K562 (cell line): ENCODE measurements at regions of chr15 and their contacts with region 1.

Region 1: DNA sequence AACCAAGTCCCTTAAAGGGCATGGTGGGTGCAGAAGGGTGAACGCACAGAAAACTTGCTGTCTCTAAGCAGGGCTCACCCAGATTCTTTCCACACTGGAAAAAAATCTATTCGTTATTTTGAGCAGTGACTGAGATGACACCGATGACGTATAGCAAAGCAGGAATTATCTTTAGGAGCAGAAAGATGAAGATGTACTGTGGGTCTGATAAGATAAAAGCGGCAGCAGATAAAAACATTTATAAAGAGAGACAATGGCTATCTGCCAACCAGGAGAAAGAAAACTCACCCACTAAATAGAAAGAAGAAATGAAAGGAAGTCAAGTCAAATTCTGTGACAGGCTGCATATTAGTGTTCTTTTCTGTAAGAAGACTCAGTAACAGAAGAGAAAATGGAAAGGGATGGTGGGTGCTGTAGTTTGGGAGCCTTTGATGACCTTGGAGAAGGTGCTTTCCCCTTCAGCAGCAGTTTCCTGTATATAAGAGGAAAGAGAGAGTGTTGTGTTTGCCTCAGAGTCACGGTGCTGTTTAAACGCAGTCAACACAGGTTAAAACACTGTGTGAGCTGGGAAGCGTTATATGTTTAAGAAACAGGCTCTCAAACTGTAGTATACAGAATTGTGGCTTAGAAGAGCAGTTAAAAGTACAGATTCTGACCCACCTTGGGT is 111.6 kb downstream of the AQP9 start:
- DNase-seq: peak in 1 of 4 experiments; percentile 15
- ATAC-seq: no peak
- H3K4me3 ChIP-seq: no peak overlapping the region
- H3K27ac ChIP-seq: no peak overlapping the region
- H3K4me1 ChIP-seq: peaks cover 0 to 9% of the 10 kb centered on the region in 2 experiments; a peak in 3 of 5 replicates
- H3K27me3 ChIP-seq: no peaks in the 10 kb centered on the region
- CTCF ChIP-seq: no peak
- EP300 ChIP-seq: peak; percentile 65
- POLR2A ChIP-seq: no peak
- RAD21 ChIP-seq: no peak

Region 2: GRCh38 chr15:58632789-58633188 is 383.0 kb after region 1 on chr15:
- CTCF ChIA-PET with region 1: no interaction called
- POLR2A ChIA-PET with region 1: no interaction called
- in situ Hi-C with region 1: loop called (anchors 10 kb)
- intact Hi-C with region 1: no loop called
- DNase-seq: no peak
- ATAC-seq: no peak
- H3K4me3 ChIP-seq: no peak overlapping the region
- H3K27ac ChIP-seq: no peak overlapping the region
- H3K4me1 ChIP-seq: no peaks in the 10 kb centered on the region
- H3K27me3 ChIP-seq: no peaks in the 10 kb centered on the region
- CTCF ChIP-seq: no peak
- EP300 ChIP-seq: no peak
- POLR2A ChIP-seq: no peak
- RAD21 ChIP-seq: no peak